HEK293 (cell line): ENCODE measurements at regions of chr10 and their contacts with region 1.

Region 1: DNA sequence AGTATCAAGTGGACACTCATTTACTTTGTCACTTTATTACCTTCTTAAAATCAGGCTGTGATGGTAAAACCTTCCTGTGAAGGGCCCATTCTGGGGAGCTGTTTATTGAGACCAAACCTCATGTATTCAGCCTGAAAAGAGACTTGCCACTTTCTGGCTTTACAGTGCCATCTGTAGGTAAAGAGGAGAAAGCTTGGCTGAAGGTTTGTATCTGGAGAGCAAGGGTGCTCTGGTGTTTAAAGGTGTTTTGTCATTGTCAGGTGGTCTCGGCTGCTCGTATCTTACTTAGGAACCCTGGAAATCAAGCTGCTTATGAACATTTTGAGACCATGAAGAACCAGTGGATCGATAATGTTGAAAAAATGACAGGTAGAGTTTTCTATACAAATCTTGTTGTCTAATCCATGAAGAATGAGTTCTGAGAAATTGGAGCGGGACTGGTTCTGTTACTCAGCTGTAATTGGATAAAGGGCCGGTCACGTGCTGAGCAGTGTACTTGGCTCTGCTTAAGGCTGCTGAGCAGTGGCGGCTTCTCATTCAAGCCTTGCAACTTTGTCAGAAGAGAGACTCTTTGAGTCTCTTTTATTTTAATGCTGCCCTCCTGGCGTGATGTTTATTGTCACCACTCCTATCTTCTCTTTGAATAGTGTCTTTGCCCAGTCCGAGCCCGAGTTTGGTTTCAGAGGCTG is 46.9 kb downstream of the AP3M1 start:
- H3K4me3 ChIP-seq: no peak overlapping the region
- H3K27ac ChIP-seq: no peak overlapping the region
- H3K4me1 ChIP-seq: no peaks in the 10 kb centered on the region
- CTCF ChIP-seq: 0 out of 2 replicates have a peak, but pooled peaks have one; percentile 9

Region 2: DNA sequence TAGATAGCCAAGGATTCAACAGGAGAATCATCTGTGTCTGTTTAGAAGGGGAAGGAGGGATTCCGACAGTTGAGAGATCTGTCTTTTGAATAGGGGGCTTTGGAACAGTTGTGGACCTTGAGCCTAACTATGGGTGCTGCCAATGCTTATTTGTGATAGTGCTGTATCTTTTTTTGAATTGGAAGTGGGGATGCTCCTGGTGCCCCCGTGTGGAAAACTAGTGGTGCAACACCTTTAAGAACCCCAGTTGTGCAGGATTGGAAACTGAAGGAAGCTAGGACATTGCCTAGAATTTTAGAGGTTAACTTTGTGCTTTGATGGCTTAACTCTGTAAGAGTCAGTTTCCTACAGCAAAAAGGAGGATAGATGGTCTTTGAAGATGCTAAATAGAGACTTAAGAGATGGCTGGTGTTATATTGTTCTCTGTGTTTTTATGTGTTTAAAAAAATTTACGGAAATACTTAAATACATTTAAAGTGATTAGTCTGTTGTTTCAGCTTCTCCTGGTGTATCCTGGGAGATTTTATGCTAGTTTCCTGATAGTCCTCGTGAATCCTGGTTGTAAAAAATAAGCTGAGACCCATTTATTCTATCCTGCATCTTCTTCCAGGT is 22.4 kb before region 1 on chr10:
- CTCF ChIA-PET with region 1: interaction called, 15 read pairs
- POLR2A ChIA-PET with region 1: no interaction called
- H3K4me3 ChIP-seq: no peak overlapping the region
- H3K27ac ChIP-seq: no peak overlapping the region
- H3K4me1 ChIP-seq: peaks cover 10% of the 10 kb centered on the region
- CTCF ChIP-seq: peak; percentile 62; the same call in 1 of the 2 replicates